ENCODE measurements at regions of chr11 and their contacts with region 1.

Region 1: GRCh38 chr11:59283825-59284772 is 71.4 kb upstream of the MPEG1 start:
- DNase-seq: peak in 1 of 3 donors; percentile 64
- ATAC-seq: peak; percentile 89
- H3K4me3 ChIP-seq: no peak overlapping the region
- H3K4me1 ChIP-seq: no peaks in the 10 kb centered on the region
- CTCF ChIP-seq: peak; percentile 71

Region 2: GRCh38 chr11:59164028-59164427 is 120.1 kb before region 1 on chr11:
- intact Hi-C with region 1: loop called in 1 of 2 experiments (anchors 10 kb)
- DNase-seq: no peak
- ATAC-seq: no peak
- H3K4me3 ChIP-seq: no peak overlapping the region
- H3K4me1 ChIP-seq: no peaks in the 10 kb centered on the region
- CTCF ChIP-seq: no peak

Region 3: DNA sequence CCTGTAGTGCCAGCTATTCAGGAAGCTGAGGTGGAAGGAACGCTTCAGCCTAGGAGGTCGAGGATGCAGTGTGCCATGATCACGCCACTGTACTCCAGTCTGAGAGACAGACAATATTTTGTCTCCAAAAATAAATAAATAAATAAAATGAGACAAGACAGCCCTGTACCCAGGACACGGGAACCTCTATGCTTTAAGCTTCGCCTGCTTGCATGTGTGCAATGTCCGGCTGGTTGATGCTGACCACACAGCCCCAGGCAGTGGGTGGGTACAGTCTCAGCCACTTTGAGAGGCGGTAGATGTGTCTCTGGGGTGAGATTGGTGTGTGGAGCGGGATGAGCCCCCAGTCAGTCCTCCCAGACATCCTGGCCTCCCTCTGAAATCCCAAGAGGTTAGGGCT is 19.3 kb before region 1 on chr11:
- intact Hi-C with region 1: loop called in 1 of 2 experiments (anchors 2 kb)
- DNase-seq: no peak
- ATAC-seq: no peak
- H3K4me3 ChIP-seq: no peak overlapping the region
- H3K4me1 ChIP-seq: no peaks in the 10 kb centered on the region
- CTCF ChIP-seq: no peak

Measured in mucosa of descending colon (tissue), 3 donors.